Calu3 (cell line): ENCODE measurements at regions of chr6 and their contacts with region 1.

Region 1: DNA sequence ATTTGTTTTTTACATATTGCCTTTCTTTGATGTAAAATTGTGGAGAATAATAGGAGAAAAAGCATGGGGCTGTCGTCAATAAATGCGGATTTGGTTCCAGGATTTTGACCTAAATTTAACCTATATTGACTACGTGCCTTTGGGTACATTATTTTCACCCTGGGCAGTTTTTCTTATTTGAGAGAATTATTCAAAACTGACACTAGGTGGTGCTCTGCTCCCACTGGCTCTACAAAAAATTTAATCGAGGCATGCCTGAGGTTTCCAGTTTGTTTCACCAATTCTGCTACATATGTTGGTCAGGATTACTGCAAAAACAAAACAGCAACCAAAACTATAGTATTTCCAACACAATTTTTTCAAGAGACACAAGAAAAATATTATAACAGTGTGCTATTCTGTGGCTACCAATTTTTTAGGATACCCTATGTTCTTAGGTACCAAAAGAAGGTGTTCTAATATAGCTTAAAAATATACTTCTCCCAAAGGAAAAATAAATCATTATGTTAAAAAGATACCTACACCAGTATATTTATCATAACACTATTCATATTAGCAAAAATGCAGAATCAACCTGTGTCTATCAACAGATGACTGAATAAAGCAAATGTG is 48.6 kb upstream of the FABP7 start:
- DNase-seq: peak; percentile 28
- H3K4me3 Mint-ChIP-seq: no peak overlapping the region
- H3K27ac Mint-ChIP-seq: no peak overlapping the region
- H3K4me1 Mint-ChIP-seq: no peaks in the 10 kb centered on the region
- H3K27me3 Mint-ChIP-seq: no peaks in the 10 kb centered on the region
- CTCF ChIP-seq: peak; percentile 73

Region 2: DNA sequence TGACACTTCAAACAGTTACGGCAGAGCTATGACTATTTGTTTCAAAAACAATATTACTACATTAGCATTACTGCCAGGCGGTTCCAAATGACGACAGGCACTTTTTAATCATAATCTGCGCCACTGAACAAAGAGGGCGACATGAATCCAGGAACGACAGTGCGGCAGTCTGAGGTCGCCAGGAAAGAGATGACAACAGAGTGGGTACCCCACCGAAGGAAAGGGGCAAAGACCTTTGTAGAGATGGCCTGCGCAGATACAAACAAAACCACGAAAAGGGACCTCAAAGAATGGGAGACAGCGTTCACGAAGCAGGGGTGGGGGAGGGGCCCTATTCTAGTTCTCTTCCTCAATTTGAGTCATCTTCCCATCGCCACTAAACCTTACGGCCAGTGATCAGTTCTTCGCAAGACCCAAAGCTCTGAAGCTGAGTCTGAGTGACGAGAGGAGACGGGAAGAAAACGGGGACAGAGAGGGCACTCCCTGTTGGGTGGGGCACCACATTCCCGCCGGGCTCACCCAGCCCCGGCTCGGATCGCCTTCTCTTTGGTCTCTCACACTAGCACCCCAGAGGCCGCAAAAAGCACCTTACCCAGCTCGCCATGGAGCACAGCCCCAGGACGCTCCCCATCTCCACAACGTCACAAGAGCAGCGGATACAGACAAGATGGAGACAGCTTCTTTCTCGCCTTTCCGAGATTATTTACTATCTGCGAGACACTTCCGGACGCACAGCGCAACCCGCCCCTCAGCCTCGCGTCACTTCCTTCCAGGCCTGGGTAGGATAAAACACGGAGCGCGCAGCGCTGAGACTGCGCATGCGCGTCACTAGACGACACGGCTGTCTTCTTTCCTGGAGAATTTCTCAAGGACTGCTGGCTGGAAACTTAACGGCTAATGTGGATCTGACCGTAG is 259.5 kb before region 1 on chr6 and contains the start of gene SERINC1:
- CTCF ChIA-PET with region 1: no interaction called
- intact Hi-C with region 1: loop called (anchors 5 kb)
- DNase-seq: peak; percentile 88
- H3K4me3 Mint-ChIP-seq: peak within 1 kb of the TSS; percentile 94
- H3K27ac Mint-ChIP-seq: peak within 1 kb of the TSS; percentile 96
- H3K4me1 Mint-ChIP-seq: no peaks in the 10 kb centered on the region
- H3K27me3 Mint-ChIP-seq: no peaks in the 10 kb centered on the region
- CTCF ChIP-seq: no peak
- total RNA-seq, gene SERINC1: 117 and 125 TPM in 2 replicates

Region 3: DNA sequence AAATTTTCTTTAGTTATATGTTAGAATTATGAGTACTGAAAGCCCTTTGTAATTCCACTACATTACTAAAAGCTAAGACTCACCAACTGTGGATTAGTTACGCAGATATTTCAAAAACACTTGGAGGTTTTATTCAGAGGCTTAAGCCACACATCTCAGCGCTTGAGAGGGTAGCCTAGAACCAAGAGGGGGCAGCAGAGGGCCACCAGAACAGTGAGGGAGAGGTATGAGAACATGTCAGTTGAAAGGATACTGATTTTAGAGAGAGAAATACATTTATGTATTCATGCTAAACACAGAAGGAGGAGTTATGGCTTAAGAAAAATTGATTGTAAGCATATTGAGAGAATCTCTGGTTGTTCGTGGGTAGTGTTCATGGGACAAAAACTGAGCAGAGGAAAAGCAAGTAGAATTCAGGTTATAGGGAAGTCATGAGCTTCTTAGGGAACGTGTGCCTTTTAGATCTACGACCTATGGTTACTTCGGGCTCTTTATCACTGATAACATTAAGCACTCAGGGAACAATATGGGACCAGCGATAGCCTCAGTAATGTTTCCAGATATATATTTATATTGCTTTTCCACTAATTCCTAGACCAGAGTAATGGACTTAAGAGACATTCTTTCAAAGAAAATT is 238.8 kb before region 1 on chr6:
- CTCF ChIA-PET with region 1: interaction called, 9 read pairs
- intact Hi-C with region 1: loop called (anchors 1 kb)
- DNase-seq: peak; percentile 81
- H3K4me3 Mint-ChIP-seq: no peak overlapping the region
- H3K27ac Mint-ChIP-seq: no peak overlapping the region
- H3K4me1 Mint-ChIP-seq: peaks cover 23% of the 10 kb centered on the region
- H3K27me3 Mint-ChIP-seq: no peaks in the 10 kb centered on the region
- CTCF ChIP-seq: peak; percentile 79

Region 4: DNA sequence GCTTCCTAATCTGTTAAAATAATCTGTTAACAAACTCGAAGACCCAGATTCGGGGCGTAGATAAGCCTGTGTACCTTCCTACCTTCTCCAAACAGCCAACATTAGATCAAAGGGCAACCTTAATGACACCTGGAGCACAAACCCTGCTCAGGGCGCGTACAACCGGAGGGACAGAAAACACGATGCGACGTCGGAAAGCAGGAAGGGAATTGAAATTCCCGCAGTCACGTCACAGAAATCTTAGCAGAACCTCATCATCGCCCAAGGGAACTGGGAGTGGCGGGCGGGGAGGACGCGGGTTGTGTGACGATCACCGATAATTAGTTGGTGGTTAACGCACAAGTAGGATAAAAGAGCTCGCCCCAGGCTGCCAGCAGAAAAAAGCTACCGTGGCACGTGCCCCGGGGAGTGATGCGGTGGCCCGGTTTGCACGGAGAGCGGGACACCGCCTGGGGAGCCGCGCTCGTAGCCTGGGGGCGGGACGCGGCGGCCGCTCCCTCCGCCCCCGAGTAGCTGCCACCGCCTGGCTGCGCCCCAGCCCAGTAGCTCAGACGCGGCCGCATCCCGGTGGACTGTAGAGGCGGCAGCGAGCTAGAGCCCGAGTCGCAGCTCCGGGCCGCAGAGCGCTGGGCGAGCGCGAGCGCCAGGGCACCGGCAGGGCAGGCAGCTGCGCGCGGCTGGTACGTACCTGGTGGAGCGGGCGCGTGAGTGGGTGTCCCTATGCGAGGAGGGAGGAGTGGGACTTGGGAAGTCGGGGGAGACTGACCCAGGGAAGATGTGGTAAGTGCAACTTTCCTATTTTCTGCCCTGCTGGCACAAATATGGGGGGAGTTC is 120.8 kb before region 1 on chr6 and contains the start of gene PKIB:
- CTCF ChIA-PET with region 1: interaction called, 10 read pairs
- intact Hi-C with region 1: loop called (anchors 2 kb)
- DNase-seq: peak; percentile 87
- H3K4me3 Mint-ChIP-seq: peak within 1 kb of the TSS; percentile 88
- H3K27ac Mint-ChIP-seq: peak within 1 kb of the TSS; percentile 39
- H3K4me1 Mint-ChIP-seq: no peaks in the 10 kb centered on the region
- H3K27me3 Mint-ChIP-seq: no peaks in the 10 kb centered on the region
- CTCF ChIP-seq: peak; percentile 21
- total RNA-seq, gene PKIB: 11.8 and 17.2 TPM in 2 replicates

Region 5: DNA sequence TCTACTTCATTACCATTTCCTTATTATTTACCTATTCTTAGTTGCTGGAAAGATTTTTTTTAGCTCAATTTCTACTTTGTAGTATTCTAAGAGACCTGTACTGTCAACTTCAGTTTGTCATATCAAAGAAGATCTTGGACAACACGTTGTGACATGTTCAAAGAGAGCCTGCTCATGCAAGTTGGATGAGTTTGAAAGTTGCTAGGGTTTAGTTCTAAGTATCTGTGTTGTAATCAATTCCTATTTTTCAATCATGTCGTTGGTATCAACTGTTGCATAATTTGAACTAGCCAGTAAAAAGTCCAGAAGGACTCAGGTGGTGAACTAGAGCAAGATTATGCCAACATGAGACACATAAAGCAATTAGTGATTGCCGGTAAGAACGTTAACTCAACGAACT is 90.5 kb before region 1 on chr6:
- CTCF ChIA-PET with region 1: no interaction called
- intact Hi-C with region 1: no loop called
- DNase-seq: no peak
- H3K4me3 Mint-ChIP-seq: no peak overlapping the region
- H3K27ac Mint-ChIP-seq: no peak overlapping the region
- H3K4me1 Mint-ChIP-seq: no peaks in the 10 kb centered on the region
- H3K27me3 Mint-ChIP-seq: no peaks in the 10 kb centered on the region
- CTCF ChIP-seq: no peak

Region 6: DNA sequence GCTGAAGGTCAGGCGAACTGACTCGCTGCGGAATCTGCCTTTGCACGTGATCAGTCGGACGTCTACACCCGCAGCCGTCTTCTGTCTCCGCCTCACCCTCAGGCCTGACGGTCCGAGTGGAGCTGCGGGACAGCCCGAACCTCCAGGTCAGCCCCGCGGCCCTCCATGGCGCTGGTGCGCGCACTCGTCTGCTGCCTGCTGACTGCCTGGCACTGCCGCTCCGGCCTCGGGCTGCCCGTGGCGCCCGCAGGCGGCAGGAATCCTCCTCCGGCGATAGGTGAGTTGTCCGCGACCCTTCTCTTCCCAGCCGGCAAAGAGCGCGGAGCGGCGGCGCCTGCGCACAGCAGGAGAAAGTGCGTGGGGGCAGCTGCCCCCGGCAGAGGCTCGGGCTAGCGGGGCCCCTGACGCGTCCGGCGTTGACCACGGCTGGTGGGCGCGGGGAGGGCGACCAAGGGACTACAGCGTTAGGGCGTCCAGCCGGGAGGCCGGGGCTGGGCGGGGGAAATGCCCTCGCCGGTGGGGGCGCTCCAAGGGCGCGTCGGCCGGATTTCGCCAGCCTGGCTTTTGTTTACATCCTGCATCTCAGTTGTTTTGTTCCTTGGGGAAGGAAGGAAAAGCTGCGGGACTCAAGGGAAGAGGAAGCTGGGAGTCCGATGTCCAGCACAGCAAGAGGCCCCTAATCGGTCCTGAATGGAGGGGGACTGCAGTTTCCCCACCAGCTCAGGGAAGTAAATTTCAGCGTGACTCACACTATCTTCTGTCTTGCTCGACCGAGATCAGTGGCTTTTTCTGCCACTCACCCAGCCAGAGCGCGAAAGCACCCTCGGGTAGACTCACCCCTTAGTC is 58.5 kb after region 1 on chr6 and contains the start of gene SMPDL3A:
- CTCF ChIA-PET with region 1: no interaction called
- intact Hi-C with region 1: loop called (anchors 5 kb)
- DNase-seq: peak; percentile 80
- H3K4me3 Mint-ChIP-seq: peak within 1 kb of the TSS; percentile 93
- H3K27ac Mint-ChIP-seq: peak within 1 kb of the TSS; percentile 73
- H3K4me1 Mint-ChIP-seq: peaks cover 11% of the 10 kb centered on the region
- H3K27me3 Mint-ChIP-seq: no peaks in the 10 kb centered on the region
- CTCF ChIP-seq: peak; percentile 49
- total RNA-seq, gene SMPDL3A: 1.6 and 1.8 TPM in 2 replicates

Region 7: DNA sequence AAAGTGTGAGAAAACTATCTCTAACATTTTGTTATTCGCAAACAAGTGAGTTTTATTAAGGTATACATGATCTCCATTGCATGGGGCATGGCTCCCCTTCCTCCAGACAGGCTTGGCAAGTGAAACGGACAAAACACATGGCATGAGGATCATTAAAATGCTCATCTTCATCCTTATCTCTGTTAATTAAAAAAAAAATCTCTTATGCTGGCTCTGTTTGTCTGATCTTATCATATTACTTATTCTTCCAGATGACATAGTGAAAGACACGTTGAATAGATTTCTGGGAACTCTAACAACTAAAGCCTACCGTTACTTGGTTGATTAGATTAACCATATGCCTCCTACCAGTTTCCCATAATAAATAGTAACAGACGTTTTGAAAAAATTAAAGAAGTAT is 354.5 kb after region 1 on chr6:
- CTCF ChIA-PET with region 1: no interaction called
- intact Hi-C with region 1: no loop called
- DNase-seq: no peak
- H3K4me3 Mint-ChIP-seq: no peak overlapping the region
- H3K27ac Mint-ChIP-seq: no peak overlapping the region
- H3K4me1 Mint-ChIP-seq: peaks cover 8% of the 10 kb centered on the region
- H3K27me3 Mint-ChIP-seq: no peaks in the 10 kb centered on the region
- CTCF ChIP-seq: no peak

Region 8: DNA sequence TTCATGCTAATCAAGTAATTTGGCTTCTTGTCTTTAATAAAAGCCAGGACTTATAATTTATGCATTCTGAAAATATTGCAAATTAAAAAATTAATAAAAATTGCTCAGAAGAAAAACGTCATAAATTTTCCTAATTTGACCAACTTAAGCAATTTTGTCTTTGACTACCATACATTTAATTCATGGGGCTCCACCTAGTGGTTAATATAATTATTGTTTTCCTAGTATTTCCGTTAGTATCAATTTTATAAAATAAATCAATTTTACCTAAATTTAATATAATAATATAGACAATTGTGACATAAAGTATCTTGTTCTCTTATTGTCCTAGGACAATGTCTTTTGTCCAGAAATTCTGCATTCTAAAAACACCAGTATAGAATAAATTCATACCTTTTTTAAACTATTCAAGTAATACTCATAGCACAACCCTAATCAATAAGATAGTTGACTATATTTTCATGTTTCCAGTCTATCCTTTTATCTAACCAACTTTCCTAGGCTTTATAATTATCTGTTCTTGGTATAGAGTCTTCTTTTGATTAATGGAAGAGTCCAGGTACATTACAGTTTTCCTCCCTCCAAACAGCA is 585.9 kb after region 1 on chr6:
- CTCF ChIA-PET with region 1: no interaction called
- intact Hi-C with region 1: loop called (anchors 1 kb)
- DNase-seq: no peak
- H3K4me3 Mint-ChIP-seq: no peak overlapping the region
- H3K27ac Mint-ChIP-seq: no peak overlapping the region
- H3K4me1 Mint-ChIP-seq: no peaks in the 10 kb centered on the region
- H3K27me3 Mint-ChIP-seq: no peaks in the 10 kb centered on the region
- CTCF ChIP-seq: peak; percentile 16